WTC11 (cell line): ENCODE measurements at regions of chr11 and their contacts with region 1.

Region 1: DNA sequence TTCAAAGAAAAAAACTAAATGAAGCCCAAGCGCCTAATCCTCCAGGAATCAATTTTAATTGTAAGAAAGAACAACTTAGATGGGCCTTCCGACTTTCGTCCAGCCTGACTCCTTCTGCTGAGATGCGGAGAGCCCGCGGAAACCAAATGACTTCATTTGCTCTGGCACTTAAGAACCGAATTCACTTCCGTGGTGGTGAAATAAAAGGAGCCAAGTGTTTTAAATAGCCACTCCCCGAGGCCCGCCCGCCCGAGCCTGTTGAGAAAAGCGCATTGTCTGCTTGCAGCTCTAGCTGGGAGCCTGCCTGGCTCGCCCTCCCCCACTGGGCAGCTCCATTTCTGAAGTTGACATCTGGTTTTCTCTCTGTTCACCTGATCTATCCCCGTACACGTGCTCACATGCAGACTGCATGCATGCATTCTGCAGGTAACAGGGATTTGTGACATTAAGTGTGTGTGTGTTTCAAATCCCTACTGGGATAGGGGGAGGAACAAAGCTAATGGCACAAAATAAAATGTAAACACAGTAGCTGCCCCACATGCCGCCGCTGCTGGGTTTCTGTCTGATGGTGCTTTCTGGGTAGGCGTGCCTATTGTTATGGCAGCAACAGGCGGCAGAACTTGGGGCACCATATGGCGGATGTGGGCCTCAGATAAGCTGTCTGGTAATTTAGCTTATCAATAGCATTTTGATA is 6.2 kb downstream of the TEAD1 start:
- DNase-seq: peak; percentile 91
- ATAC-seq: peak; percentile 84
- H3K4me3 Mint-ChIP-seq: peak overlapping the region; percentile 70
- H3K27ac Mint-ChIP-seq: peak overlapping the region; percentile 99
- H3K4me1 Mint-ChIP-seq: peaks cover 95% of the 10 kb centered on the region
- H3K27me3 Mint-ChIP-seq: peaks cover 10% of the 10 kb centered on the region
- CTCF ChIP-seq: no peak

Region 2: DNA sequence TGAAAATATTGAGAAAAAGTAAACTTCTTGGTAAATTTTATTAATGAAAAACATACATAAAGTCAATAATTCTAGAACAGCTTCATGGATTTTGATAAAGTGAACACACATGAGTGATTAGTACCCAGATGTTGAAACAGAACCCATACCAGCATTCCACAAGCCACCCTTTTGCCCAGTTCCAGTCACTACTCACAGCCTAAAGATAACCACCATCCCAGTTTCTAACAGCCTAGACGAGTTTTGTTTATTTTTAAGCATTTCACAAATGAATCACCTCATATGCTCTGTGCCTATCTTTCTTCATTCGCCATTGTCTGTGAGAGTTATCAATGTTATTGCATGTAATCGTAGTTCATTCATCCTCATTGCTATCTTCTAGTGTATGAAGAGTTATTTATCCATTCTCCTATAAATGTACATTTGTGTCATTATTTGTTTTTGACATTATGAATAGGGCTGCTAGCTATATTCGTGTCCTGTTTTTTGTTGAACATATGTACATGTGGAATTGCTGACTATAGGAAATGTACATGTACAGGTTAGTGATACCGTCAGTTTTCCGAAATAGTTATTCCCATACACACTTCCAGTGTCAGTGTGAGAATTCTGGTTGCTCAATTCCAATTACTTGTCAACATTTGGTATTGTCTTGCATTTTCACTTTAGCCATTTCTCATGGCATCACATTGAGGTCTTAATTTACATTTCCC is 50.6 kb before region 1 on chr11:
- CTCF ChIA-PET with region 1: no interaction called
- POLR2A ChIA-PET with region 1: no interaction called
- DNase-seq: no peak
- ATAC-seq: no peak
- H3K4me3 Mint-ChIP-seq: no peak overlapping the region
- H3K27ac Mint-ChIP-seq: no peak overlapping the region
- H3K4me1 Mint-ChIP-seq: no peaks in the 10 kb centered on the region
- H3K27me3 Mint-ChIP-seq: no peaks in the 10 kb centered on the region
- CTCF ChIP-seq: no peak

Region 3: GRCh38 chr11:12669930-12670329 is 10.5 kb before region 1 on chr11:
- CTCF ChIA-PET with region 1: interaction called, 15 read pairs
- POLR2A ChIA-PET with region 1: interaction called, 4 read pairs
- DNase-seq: no peak
- ATAC-seq: no peak
- H3K4me3 Mint-ChIP-seq: no peak overlapping the region
- H3K27ac Mint-ChIP-seq: no peak overlapping the region
- H3K4me1 Mint-ChIP-seq: peaks cover 5% of the 10 kb centered on the region; the same call in 1 of the 2 replicates
- H3K27me3 Mint-ChIP-seq: peaks cover 13% of the 10 kb centered on the region
- CTCF ChIP-seq: no peak

Region 4: DNA sequence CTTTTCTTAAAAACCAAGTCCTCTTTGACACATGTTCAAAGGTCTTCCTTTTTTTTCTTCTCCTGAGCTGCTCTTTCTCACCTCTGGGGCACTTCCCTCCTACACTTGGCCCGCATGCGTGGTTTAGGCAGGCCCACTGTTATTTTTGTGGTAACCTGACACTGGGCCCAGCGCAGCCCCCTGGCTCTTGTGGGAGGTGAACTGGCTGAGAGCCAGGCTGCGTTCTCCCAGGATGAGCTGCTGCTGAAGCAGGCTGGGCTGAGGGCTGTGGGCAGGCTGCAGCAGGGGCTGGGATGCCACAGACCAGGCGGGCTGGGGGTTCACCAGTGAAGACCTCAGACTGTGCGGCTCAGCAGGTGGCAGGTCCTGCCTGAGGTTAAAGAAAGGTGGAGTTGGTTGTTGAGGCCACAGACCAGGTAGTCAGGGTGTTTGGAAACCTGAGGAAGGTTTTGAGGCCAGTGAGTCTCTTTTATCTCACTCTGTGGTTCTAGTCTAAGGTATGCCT is 66.3 kb after region 1 on chr11:
- CTCF ChIA-PET with region 1: interaction called, 14 read pairs
- POLR2A ChIA-PET with region 1: interaction called, 9 read pairs
- DNase-seq: peak; percentile 87
- ATAC-seq: peak; percentile 94
- H3K4me3 Mint-ChIP-seq: peak overlapping the region; percentile 26; the same call in 1 of the 2 replicates
- H3K27ac Mint-ChIP-seq: peak overlapping the region; percentile 88
- H3K4me1 Mint-ChIP-seq: peaks cover 82% of the 10 kb centered on the region
- H3K27me3 Mint-ChIP-seq: no peaks in the 10 kb centered on the region
- CTCF ChIP-seq: no peak

Region 5: GRCh38 chr11:12864316-12865156 is 184.1 kb after region 1 on chr11:
- CTCF ChIA-PET with region 1: interaction called, 5 read pairs
- POLR2A ChIA-PET with region 1: interaction called, 17 read pairs
- DNase-seq: peak; percentile 53
- ATAC-seq: peak; percentile 86
- H3K4me3 Mint-ChIP-seq: peak overlapping the region; percentile 61
- H3K27ac Mint-ChIP-seq: peak overlapping the region; percentile 100
- H3K4me1 Mint-ChIP-seq: peaks cover 92% of the 10 kb centered on the region
- H3K27me3 Mint-ChIP-seq: no peaks in the 10 kb centered on the region
- CTCF ChIP-seq: no peak